ENCODE measurements at regions of chr5 and their contacts with region 1.

Region 1: DNA sequence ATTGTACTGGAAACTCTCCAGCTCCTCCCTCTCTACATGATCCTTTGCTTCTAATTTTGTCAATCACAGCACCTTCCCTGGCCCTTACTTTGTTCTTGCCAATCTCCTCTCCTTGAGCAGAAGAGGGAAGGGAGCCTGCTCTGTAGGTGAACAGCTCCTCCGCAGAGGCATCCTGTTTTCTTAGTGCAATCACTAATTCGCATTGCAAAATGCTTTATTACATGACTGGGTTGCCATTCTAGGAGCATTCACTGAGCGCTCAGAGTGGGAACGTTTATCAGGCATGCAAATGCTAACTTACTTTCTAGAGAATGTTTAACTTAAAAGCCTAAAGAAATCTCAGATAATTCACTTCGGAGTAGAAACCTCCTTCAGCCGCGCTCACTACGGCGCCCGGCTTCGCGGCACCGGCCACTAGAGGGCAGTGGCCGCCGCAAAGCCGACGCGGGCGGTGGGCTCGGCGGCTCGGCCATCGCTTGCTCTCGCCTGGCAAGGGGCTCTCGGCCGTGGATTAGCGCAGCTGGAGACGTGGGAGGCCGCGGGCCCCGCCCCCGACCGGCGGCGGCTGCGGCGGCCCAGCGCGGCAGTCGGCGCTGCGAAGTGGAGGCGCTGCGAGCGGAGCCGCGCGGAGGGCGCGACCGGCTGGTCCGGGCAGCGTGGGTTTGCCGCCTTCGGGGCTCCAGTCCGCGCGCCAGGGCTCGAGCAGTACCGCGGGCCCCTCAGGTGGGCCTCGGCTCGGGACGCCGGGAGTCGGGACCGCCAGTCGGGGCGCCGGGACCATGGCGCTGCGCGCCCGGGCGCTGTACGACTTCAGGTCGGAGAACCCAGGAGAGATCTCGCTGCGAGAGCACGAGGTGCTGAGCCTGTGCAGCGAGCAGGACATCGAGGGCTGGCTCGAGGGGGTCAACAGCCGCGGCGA is at the start of gene SNX18:
- DNase-seq: peak; percentile 92
- H3K4me3 ChIP-seq: peak within 1 kb of the TSS; percentile 100
- H3K27ac ChIP-seq: peak within 1 kb of the TSS; percentile 99
- H3K4me1 ChIP-seq: peaks cover 54% of the 10 kb centered on the region
- H3K27me3 ChIP-seq: no peaks in the 10 kb centered on the region
- CTCF ChIP-seq: peak; percentile 96
- total RNA-seq, gene SNX18: 28.7 TPM

Region 2: DNA sequence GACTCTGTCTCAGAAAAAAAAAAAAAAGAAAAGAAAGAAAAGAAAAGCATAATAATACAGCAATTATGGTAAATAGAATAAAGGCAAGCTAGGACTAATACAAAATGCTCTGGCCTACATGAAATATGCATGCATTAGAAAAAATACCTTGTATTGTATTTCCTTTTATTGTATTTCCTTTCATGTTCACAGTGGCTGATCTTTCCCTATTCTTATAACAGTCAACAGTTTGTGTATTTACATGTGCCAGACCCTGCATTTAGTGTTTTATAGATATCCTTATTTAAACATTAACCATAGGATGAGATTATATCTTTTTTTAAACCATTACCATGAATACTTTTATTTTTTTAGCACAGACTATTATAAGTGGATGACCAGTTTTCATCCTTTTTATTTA is 150.7 kb before region 1 on chr5:
- intact Hi-C with region 1: no loop called
- DNase-seq: no peak
- H3K4me3 ChIP-seq: no peak overlapping the region
- H3K27ac ChIP-seq: no peak overlapping the region
- H3K4me1 ChIP-seq: peaks cover 7% of the 10 kb centered on the region
- H3K27me3 ChIP-seq: no peaks in the 10 kb centered on the region
- CTCF ChIP-seq: no peak

Region 3: GRCh38 chr5:54651482-54652076 is 134.1 kb after region 1 on chr5:
- intact Hi-C with region 1: loop called (anchors 10 kb)
- DNase-seq: peak; percentile 88
- H3K4me3 ChIP-seq: no peak overlapping the region
- H3K27ac ChIP-seq: peak overlapping the region; percentile 55
- H3K4me1 ChIP-seq: peaks cover 36% of the 10 kb centered on the region
- H3K27me3 ChIP-seq: no peaks in the 10 kb centered on the region
- CTCF ChIP-seq: no peak

Region 4: GRCh38 chr5:54844905-54845566 is 327.6 kb after region 1 on chr5:
- intact Hi-C with region 1: loop called (anchors 1 kb)
- DNase-seq: no peak
- H3K4me3 ChIP-seq: peak overlapping the region; percentile 51
- H3K27ac ChIP-seq: no peak overlapping the region
- H3K4me1 ChIP-seq: peaks cover 7% of the 10 kb centered on the region
- H3K27me3 ChIP-seq: no peaks in the 10 kb centered on the region
- CTCF ChIP-seq: peak; percentile 74

Measured in left ventricle myocardium inferior (tissue), 1 donor.